ENCODE measurements at regions of chr15 and their contacts with region 1.

Region 1: DNA sequence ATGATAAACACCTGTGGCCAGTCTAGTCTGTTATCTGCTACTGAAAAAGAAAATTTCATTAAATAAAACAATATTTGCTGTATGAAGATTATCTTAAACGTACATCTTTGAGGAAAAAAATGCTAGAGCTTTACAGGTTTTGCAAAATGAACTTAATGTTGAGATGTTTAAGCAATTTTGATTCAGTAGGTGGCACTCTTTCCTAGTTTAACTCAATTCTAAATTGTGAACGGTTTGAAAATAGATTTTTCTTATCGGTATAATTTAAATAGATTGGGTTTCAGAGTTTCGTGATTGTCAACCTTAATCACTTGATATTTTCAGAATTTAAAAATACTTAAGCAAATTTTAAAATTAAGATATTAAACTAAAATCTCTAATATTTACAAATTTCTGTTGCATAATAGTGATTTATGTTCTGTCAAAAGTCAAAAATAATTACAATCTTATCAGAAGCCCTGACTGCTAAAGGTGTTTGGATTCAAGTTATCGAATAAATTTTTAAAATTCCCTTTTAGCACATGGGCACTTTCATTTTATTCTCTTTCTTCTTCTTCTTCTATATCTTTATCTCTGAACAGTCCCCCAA is 7.0 kb upstream of the RNF111 start:
- DNase-seq: peak; percentile 63
- ATAC-seq: no peak
- H3K4me3 ChIP-seq: no peak overlapping the region
- H3K4me3 Mint-ChIP-seq: peak overlapping the region; percentile 67
- H3K27ac ChIP-seq: peak overlapping the region; percentile 70 to 75
- H3K27ac Mint-ChIP-seq: peak overlapping the region; percentile 98
- H3K4me1 ChIP-seq: peaks cover 50 to 59% of the 10 kb centered on the region in 2 donors
- H3K4me1 Mint-ChIP-seq: peaks cover 49% of the 10 kb centered on the region
- H3K27me3 ChIP-seq: no peaks in the 10 kb centered on the region
- H3K27me3 Mint-ChIP-seq: no peaks in the 10 kb centered on the region
- CTCF ChIP-seq: peak; percentile 79

Region 2: GRCh38 chr15:58957101-58957973 is 23.1 kb before region 1 on chr15:
- CTCF ChIA-PET with region 1: interaction called, 32 read pairs
- POLR2A ChIA-PET with region 1: no interaction called
- intact Hi-C with region 1: loop called (anchors 1 kb)
- DNase-seq: peak; percentile 83
- ATAC-seq: peak; percentile 98
- H3K4me3 ChIP-seq: no peak overlapping the region
- H3K4me3 Mint-ChIP-seq: no peak overlapping the region
- H3K27ac ChIP-seq: no peak overlapping the region
- H3K27ac Mint-ChIP-seq: peak overlapping the region; percentile 64
- H3K4me1 ChIP-seq: peaks cover 3 to 7% of the 10 kb centered on the region in 2 donors
- H3K4me1 Mint-ChIP-seq: peaks cover 5% of the 10 kb centered on the region
- H3K27me3 ChIP-seq: no peaks in the 10 kb centered on the region
- H3K27me3 Mint-ChIP-seq: no peaks in the 10 kb centered on the region
- CTCF ChIP-seq: peak; percentile 83

Region 3: DNA sequence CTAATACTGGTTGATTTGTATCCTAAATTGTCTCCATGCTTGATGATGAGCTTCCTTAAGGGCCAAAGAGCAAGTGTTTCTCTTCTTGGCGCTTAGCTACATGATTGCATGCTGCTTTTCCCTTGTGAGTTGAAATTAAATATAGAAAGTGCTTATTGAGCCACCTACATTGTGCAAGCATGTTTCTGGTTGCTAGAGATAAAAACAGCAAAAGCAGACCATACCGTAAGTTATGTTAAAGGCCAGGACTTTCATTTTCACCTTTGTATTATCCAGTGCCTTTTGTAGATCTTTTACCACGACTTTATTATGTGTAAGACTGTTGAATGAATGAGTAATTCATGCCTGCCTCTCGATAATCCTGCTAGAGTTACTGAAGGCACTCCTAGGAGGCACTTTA is 82.6 kb after region 1 on chr15:
- CTCF ChIA-PET with region 1: interaction called, 5 read pairs
- POLR2A ChIA-PET with region 1: no interaction called
- intact Hi-C with region 1: loop called (anchors 5 kb)
- DNase-seq: no peak
- ATAC-seq: no peak
- H3K4me3 ChIP-seq: no peak overlapping the region
- H3K4me3 Mint-ChIP-seq: no peak overlapping the region
- H3K27ac ChIP-seq: no peak overlapping the region
- H3K27ac Mint-ChIP-seq: no peak overlapping the region
- H3K4me1 ChIP-seq: no peaks in the 10 kb centered on the region
- H3K4me1 Mint-ChIP-seq: peaks cover 16% of the 10 kb centered on the region
- H3K27me3 ChIP-seq: no peaks in the 10 kb centered on the region
- H3K27me3 Mint-ChIP-seq: no peaks in the 10 kb centered on the region
- CTCF ChIP-seq: no peak

Region 4: GRCh38 chr15:59138243-59138642 is 157.8 kb after region 1 on chr15:
- CTCF ChIA-PET with region 1: interaction called, 24 read pairs
- POLR2A ChIA-PET with region 1: interaction called, 4 read pairs
- intact Hi-C with region 1: loop called (anchors 1 kb)
- DNase-seq: peak; percentile 74
- ATAC-seq: peak; percentile 97
- H3K4me3 ChIP-seq: no peak overlapping the region
- H3K4me3 Mint-ChIP-seq: no peak overlapping the region
- H3K27ac ChIP-seq: no peak overlapping the region
- H3K27ac Mint-ChIP-seq: peak overlapping the region; percentile 33
- H3K4me1 ChIP-seq: no peaks in the 10 kb centered on the region
- H3K4me1 Mint-ChIP-seq: peaks cover 4% of the 10 kb centered on the region
- H3K27me3 ChIP-seq: no peaks in the 10 kb centered on the region
- H3K27me3 Mint-ChIP-seq: no peaks in the 10 kb centered on the region
- CTCF ChIP-seq: peak; percentile 80

Region 5: GRCh38 chr15:59516655-59517461 is 536.4 kb after region 1 on chr15:
- CTCF ChIA-PET with region 1: interaction called, 7 read pairs
- POLR2A ChIA-PET with region 1: no interaction called
- intact Hi-C with region 1: loop called (anchors 5 kb)
- DNase-seq: peak; percentile 77
- ATAC-seq: peak; percentile 77
- H3K4me3 ChIP-seq: peak overlapping the region in 2 of 5 experiments; percentile 11 to 25
- H3K4me3 Mint-ChIP-seq: peak overlapping the region; percentile 70
- H3K27ac ChIP-seq: peak overlapping the region; percentile 93 to 94
- H3K27ac Mint-ChIP-seq: peak overlapping the region; percentile 95
- H3K4me1 ChIP-seq: peaks cover 63 to 68% of the 10 kb centered on the region in 2 donors
- H3K4me1 Mint-ChIP-seq: peaks cover 56% of the 10 kb centered on the region
- H3K27me3 ChIP-seq: no peaks in the 10 kb centered on the region
- H3K27me3 Mint-ChIP-seq: no peaks in the 10 kb centered on the region
- CTCF ChIP-seq: no peak